ENCODE measurements at regions of chr7 and their contacts with region 1.

Region 1: GRCh38 chr7:32164346-32164957 is 94.2 kb upstream of the PDE1C start:
- DNase-seq: peak; percentile 81
- H3K4me3 ChIP-seq: no peak overlapping the region
- H3K27ac ChIP-seq: no peak overlapping the region
- H3K4me1 ChIP-seq: peaks cover 35% of the 10 kb centered on the region
- H3K27me3 ChIP-seq: no peaks in the 10 kb centered on the region
- CTCF ChIP-seq: peak; percentile 71 to 79

Region 2: DNA sequence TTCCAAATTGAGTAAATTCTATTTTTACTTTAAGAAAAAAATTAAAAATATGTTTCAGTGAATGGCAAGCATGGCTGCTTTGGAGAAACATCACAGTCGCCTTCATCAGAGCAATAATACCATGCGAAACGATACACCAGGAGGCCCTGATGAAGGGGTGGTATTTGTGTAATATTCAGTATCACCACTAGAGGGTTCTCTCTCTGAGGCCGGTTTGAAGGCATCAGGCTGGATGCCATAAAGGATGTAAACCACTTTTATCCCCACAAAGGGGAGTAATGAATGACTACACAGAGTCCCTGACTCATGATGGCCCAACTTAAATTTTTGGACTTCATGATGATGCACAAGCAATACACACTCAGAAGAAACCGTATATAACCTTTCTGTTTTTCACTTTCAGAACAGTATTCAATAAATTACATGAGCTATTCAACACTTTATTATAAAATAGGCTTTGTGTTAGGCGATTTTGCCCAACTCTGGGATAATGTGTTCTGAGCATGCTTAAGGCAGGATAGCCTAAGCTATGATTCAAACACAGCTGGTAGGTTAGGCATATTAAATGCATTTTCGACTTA is 382.0 kb before region 1 on chr7:
- CTCF ChIA-PET with region 1: interaction called, 3 read pairs
- dilution Hi-C with region 1: no loop called
- in situ Hi-C with region 1: no loop called
- intact Hi-C with region 1: loop called (anchors 1 kb)
- DNase-seq: peak; percentile 69
- H3K4me3 ChIP-seq: no peak overlapping the region
- H3K27ac ChIP-seq: no peak overlapping the region
- H3K4me1 ChIP-seq: no peaks in the 10 kb centered on the region
- H3K27me3 ChIP-seq: no peaks in the 10 kb centered on the region
- CTCF ChIP-seq: peak; percentile 82 to 83

Region 3: GRCh38 chr7:31883761-31884164 is 280.7 kb before region 1 on chr7:
- CTCF ChIA-PET with region 1: interaction called, 3 read pairs
- dilution Hi-C with region 1: no loop called
- in situ Hi-C with region 1: loop called in 1 of 2 experiments (anchors 10 kb)
- intact Hi-C with region 1: loop called (anchors 1 kb)
- DNase-seq: peak; percentile 91
- H3K4me3 ChIP-seq: peak overlapping the region in 1 of 3 experiments; percentile 4
- H3K27ac ChIP-seq: peak overlapping the region; percentile 81
- H3K4me1 ChIP-seq: peaks cover 27% of the 10 kb centered on the region
- H3K27me3 ChIP-seq: no peaks in the 10 kb centered on the region
- CTCF ChIP-seq: no peak

Region 4: DNA sequence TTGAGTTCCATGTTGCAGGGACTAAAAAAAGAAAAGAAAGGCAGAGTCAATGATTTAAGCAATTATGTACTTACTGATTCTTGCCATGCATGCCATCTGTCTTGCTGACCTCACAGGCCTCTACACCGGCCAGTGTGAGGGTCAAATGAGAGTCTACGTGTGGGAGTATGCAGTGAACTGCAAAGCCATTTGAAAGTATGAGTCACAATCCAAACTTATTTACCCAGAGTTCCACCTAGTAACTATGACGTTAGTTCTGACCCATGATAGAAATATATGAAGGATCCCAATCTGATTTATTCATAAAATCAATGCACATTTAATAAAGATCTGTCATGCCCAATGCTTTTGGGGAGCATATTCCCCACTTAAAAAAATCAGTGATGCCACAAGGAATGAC is 120.7 kb before region 1 on chr7:
- CTCF ChIA-PET with region 1: interaction called, 4 read pairs
- dilution Hi-C with region 1: no loop called
- in situ Hi-C with region 1: no loop called
- intact Hi-C with region 1: loop called (anchors 1 kb)
- DNase-seq: no peak
- H3K4me3 ChIP-seq: no peak overlapping the region
- H3K27ac ChIP-seq: no peak overlapping the region
- H3K4me1 ChIP-seq: no peaks in the 10 kb centered on the region
- H3K27me3 ChIP-seq: no peaks in the 10 kb centered on the region
- CTCF ChIP-seq: no peak

Region 5: DNA sequence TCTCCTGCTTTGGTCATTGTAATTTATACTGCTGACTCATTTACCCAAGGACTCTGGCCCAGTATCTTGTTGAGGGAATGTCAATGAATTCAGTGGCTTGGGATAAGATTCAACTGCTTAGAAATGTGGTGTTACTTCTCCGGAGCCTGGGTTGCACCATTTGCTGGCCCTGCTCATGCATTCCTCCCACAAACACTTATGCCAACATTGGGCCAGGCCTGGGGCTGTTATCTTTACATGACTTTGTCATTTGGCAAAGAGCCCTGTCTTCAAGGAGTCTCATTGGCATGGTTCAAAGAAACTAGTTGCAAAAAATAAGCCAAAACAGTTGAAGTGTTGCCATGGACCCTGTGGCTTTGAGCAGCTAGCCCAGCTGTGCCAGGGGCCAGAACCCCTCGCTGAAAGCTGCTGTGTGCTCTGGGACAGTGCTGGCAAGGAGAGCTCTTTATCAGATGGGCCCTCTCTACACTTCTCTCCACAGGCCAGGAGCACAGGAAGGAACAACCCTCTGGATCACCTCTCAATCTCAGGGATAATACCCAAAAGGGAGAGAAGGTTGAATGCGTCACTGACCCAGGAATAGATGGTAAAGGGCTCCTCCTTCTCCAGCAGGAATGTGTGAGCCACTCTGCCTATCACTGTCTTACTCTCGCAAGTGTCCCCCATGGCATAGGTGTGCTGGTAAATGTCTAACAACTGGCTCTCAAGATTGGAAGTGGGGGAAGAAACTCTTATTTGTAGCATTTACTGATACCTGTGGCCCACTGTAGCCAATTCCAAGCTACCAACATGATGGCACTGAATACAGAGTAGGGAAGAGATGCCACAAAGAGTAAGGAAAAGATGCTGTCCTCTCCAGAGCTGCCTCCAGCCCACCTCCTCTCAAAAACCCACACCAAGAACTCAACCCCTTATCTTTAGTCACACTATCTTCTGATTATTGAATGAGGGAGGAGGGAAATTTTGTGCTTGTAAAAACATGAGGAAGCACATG is 70.7 kb before region 1 on chr7:
- CTCF ChIA-PET with region 1: no interaction called
- dilution Hi-C with region 1: no loop called
- in situ Hi-C with region 1: no loop called
- intact Hi-C with region 1: loop called (anchors 1 kb)
- DNase-seq: peak; percentile 89
- H3K4me3 ChIP-seq: no peak overlapping the region
- H3K27ac ChIP-seq: peak overlapping the region; percentile 59
- H3K4me1 ChIP-seq: peaks cover 34% of the 10 kb centered on the region
- H3K27me3 ChIP-seq: no peaks in the 10 kb centered on the region
- CTCF ChIP-seq: no peak

Region 6: DNA sequence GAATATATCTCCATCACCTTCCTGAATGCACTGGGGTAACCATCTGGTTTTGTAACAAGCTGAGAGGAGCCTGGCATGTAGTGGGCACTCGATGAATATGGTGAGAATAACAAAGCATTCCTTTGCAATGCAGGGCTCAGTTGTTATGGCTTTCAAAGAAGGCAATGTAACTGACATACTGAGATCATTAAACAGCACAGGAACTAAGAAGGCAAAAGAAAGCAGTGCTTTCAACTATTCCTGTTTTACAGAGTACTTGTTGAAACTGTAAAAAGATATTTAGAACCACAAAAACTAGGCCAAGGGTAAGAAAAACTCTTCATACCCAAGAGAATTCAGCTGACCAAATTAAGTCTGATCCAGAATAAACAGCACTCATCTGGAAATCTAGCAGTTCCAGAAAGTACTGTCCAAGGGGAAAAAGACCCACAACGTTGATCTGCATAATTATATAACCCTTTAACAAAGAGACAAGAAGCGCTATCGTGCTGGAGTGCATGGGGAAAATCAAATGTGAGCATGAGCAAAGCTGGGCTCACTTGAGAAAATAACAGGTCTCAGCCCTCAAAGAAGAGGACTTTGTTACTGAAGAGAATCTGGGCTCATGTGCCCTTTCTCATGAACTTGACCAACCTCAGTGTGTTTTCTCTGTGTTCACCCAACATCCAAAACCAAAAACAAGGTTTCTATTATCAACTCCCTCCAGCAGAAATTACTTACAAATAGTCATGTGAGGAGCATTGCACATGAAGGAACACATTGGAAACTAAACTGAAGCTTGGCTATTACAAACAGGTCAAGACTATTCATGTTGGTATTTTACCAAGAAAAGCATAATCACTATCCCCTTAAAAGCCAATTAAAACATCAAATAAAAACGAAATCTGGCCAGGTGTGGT is 447.0 kb after region 1 on chr7:
- CTCF ChIA-PET with region 1: no interaction called
- dilution Hi-C with region 1: no loop called
- in situ Hi-C with region 1: no loop called
- intact Hi-C with region 1: no loop called
- DNase-seq: no peak
- H3K4me3 ChIP-seq: no peak overlapping the region
- H3K27ac ChIP-seq: no peak overlapping the region
- H3K4me1 ChIP-seq: peaks cover 4% of the 10 kb centered on the region
- H3K27me3 ChIP-seq: no peaks in the 10 kb centered on the region
- CTCF ChIP-seq: no peak